Caco-2 (cell line): ENCODE measurements at regions of chr18 and their contacts with region 1.

Region 1: DNA sequence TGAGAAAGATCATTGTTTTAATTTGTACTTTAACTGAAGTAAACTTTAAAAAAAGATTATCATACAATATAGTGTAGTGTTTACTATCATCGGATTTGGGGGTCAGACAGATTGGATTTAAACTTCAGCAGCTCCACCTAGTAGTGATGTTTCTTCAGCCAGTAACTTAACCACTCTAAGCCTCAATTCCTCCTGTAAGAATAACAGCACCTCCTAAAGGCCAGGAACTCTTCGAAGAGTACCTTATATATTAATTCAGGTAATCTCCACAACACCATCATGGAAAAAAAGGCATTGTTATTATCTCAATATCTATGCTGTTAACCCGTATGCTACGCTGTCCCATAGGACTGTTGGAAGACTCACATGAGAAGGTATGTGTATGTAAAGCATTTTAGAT is 69.0 kb upstream of the DLGAP1 start:
- DNase-seq: no peak
- H3K4me3 ChIP-seq: no peak overlapping the region
- H3K4me3 Mint-ChIP-seq: no peak overlapping the region
- H3K27ac Mint-ChIP-seq: no peak overlapping the region
- H3K4me1 ChIP-seq: peaks cover 8% of the 10 kb centered on the region; the same call in 1 of the 2 replicates
- H3K4me1 Mint-ChIP-seq: peaks cover 8% of the 10 kb centered on the region
- H3K27me3 ChIP-seq: no peaks in the 10 kb centered on the region
- H3K27me3 Mint-ChIP-seq: peaks cover 9% of the 10 kb centered on the region
- CTCF ChIP-seq: no peak

Region 2: GRCh38 chr18:4106407-4107033 is 417.6 kb before region 1 on chr18:
- CTCF ChIA-PET with region 1: no interaction called
- POLR2A ChIA-PET with region 1: no interaction called
- intact Hi-C with region 1: loop called (anchors 2 kb)
- DNase-seq: peak; percentile 60 to 69
- H3K4me3 ChIP-seq: no peak overlapping the region
- H3K4me3 Mint-ChIP-seq: no peak overlapping the region
- H3K27ac Mint-ChIP-seq: no peak overlapping the region
- H3K4me1 ChIP-seq: no peaks in the 10 kb centered on the region
- H3K4me1 Mint-ChIP-seq: no peaks in the 10 kb centered on the region
- H3K27me3 ChIP-seq: no peaks in the 10 kb centered on the region
- H3K27me3 Mint-ChIP-seq: peaks cover 16% of the 10 kb centered on the region
- CTCF ChIP-seq: peak; percentile 86

Region 3: DNA sequence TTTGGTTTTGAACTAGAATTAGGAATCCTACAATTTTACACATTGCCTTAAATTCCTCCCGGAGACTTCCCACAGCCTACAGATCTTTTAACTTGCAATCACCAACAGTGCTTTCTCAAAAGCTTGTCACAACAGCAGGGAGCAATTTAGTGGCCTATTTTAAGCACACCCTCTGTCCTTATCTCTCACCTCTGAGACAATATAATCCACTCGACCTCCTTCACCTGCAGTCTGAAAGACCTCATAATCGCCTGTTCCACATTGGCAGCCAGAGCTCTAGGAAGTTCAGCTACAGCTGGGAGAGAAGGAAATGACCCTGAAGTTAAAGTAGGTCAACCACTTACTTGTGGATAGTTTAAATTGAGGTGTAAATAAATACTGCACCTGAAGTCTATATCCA is 180.7 kb after region 1 on chr18:
- CTCF ChIA-PET with region 1: no interaction called
- POLR2A ChIA-PET with region 1: no interaction called
- intact Hi-C with region 1: no loop called
- DNase-seq: no peak
- H3K4me3 ChIP-seq: no peak overlapping the region
- H3K4me3 Mint-ChIP-seq: no peak overlapping the region
- H3K27ac Mint-ChIP-seq: no peak overlapping the region
- H3K4me1 ChIP-seq: no peaks in the 10 kb centered on the region
- H3K4me1 Mint-ChIP-seq: no peaks in the 10 kb centered on the region
- H3K27me3 ChIP-seq: no peaks in the 10 kb centered on the region
- H3K27me3 Mint-ChIP-seq: peaks cover 4% of the 10 kb centered on the region
- CTCF ChIP-seq: no peak